Dendritic cell treated with granulocyte-macrophage colony-stimulating factor and Interleukin-4, amounts not matched to agents 40 ng/mL and 50 ng/mL, for 4 days (primary cell): ENCODE measurements at regions of chr5 and their contacts with region 1.

Region 1: GRCh38 chr5:64634997-64635686 is 55.2 kb upstream of the SHISAL2B start:
- H3K4me3 Mint-ChIP-seq: no peak overlapping the region
- H3K27ac Mint-ChIP-seq: no peak overlapping the region
- H3K4me1 Mint-ChIP-seq: peaks cover 7% of the 10 kb centered on the region
- H3K27me3 Mint-ChIP-seq: peaks cover 7% of the 10 kb centered on the region

Region 2: GRCh38 chr5:64784451-64785025 is 149.4 kb after region 1 on chr5:
- intact Hi-C with region 1: loop called (anchors 1 kb)
- H3K4me3 Mint-ChIP-seq: no peak overlapping the region
- H3K27ac Mint-ChIP-seq: no peak overlapping the region
- H3K4me1 Mint-ChIP-seq: peaks cover 7% of the 10 kb centered on the region
- H3K27me3 Mint-ChIP-seq: no peaks in the 10 kb centered on the region